GM10248 (cell line): ENCODE measurements at regions of chr18 and their contacts with region 1.

Region 1: GRCh38 chr18:62772860-62773584 is 57.7 kb downstream of the PHLPP1 start:
- DNase-seq: no peak
- CTCF ChIP-seq: no peak

Region 2: GRCh38 chr18:62784966-62785413 is 12.0 kb after region 1 on chr18:
- CTCF ChIA-PET with region 1: interaction called, 14 read pairs
- POLR2A ChIA-PET with region 1: no interaction called
- DNase-seq: no peak
- CTCF ChIP-seq: no peak

Region 3: GRCh38 chr18:62797329-62797728 is 24.3 kb after region 1 on chr18:
- CTCF ChIA-PET with region 1: no interaction called
- POLR2A ChIA-PET with region 1: no interaction called
- DNase-seq: no peak
- CTCF ChIP-seq: no peak